ENCODE measurements at regions of chr2 and their contacts with region 1.

Region 1: GRCh38 chr2:98269274-98269673 is 77.0 kb upstream of the CNGA3 start:
- DNase-seq: peak; percentile 15
- H3K4me3 ChIP-seq: no peak overlapping the region
- H3K27ac ChIP-seq: no peak overlapping the region
- H3K27me3 ChIP-seq: peaks cover 3% of the 10 kb centered on the region
- CTCF ChIP-seq: peak; percentile 80

Region 2: DNA sequence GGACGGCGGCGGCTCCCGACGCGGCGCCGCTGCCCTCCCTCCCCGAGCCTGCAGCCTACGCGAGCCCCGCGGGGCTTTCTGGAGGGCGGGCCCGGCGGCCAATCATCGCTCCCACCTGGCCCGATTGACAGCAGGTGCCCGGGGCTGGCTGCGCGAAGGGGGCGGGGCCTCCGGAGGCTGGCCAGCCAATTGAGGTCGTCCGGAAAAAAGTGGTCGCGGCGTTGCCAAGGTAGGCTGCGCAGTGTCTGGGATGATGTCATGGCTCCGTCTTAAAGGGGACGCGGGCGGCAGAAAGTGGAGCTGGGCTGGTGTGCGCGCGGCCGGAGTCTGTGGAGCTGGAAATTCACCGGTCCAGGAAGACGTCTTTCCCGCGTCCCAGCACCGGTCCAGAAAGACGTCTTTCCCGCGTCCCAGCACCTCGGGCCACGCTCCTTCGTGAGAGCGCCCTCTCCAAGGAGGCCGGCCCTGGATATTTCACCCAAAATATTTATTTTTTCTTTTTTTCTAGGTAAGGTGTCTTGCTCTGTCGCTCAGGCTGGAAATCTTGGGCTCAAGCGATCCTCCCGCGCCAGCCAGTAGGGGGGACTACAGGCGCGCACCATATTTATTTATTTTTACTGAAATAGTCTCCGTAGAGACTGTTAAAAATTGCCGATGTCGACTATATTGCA is 605.2 kb before region 1 on chr2 and contains the start of gene ACTR1B:
- CTCF ChIA-PET with region 1: interaction called, 15 read pairs
- POLR2A ChIA-PET with region 1: no interaction called
- DNase-seq: peak; percentile 95
- H3K4me3 ChIP-seq: peak within 1 kb of the TSS; percentile 79
- H3K27ac ChIP-seq: peak within 1 kb of the TSS; percentile 94
- H3K27me3 ChIP-seq: no peaks in the 10 kb centered on the region
- CTCF ChIP-seq: peak; percentile 68
- polyA plus RNA-seq, gene ACTR1B: 26.4 and 37.6 TPM in 2 replicates

Region 3: GRCh38 chr2:97710596-97711386 is 558.5 kb before region 1 on chr2:
- CTCF ChIA-PET with region 1: interaction called, 16 read pairs
- POLR2A ChIA-PET with region 1: no interaction called
- DNase-seq: no peak
- H3K4me3 ChIP-seq: no peak overlapping the region
- H3K27ac ChIP-seq: no peak overlapping the region
- H3K27me3 ChIP-seq: peaks cover 14% of the 10 kb centered on the region
- CTCF ChIP-seq: no peak

Region 4: GRCh38 chr2:97740590-97741182 is 528.6 kb before region 1 on chr2:
- CTCF ChIA-PET with region 1: interaction called, 15 read pairs
- POLR2A ChIA-PET with region 1: no interaction called
- DNase-seq: no peak
- H3K4me3 ChIP-seq: no peak overlapping the region
- H3K27ac ChIP-seq: no peak overlapping the region
- H3K27me3 ChIP-seq: peaks cover 2% of the 10 kb centered on the region
- CTCF ChIP-seq: peak; percentile 80

Region 5: DNA sequence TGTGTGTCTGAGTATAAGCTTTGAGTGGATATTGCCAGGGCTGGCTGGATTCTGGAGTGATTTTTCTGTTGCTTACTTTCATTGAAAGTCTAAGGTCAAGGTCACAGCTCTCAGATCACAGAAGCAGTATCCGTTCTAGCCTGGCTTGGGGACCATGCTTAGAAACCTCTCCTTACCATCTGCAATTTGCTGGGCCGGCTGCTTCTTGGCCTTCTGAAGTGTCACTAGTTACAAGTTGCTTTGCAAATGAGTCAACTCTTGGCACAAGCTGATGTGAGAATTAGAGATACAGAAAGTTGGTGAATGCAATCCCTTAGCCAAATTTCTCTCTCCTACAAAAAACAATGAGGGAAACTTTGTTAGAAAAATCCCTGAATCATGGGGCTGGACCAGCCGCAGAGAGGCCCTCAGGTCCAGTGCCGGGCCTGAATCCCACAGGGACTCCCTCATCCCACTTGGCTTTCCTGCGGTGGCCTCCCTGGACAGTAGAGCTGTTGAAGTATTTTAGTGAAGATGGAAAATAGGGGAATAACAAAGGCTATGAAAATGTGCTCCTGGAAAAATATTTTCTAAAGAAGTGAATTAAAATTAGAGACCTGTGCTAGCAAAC is 15.7 kb before region 1 on chr2:
- CTCF ChIA-PET with region 1: interaction called, 13 read pairs
- POLR2A ChIA-PET with region 1: no interaction called
- DNase-seq: no peak
- H3K4me3 ChIP-seq: no peak overlapping the region
- H3K27ac ChIP-seq: no peak overlapping the region
- H3K27me3 ChIP-seq: no peaks in the 10 kb centered on the region
- CTCF ChIP-seq: no peak

Region 6: DNA sequence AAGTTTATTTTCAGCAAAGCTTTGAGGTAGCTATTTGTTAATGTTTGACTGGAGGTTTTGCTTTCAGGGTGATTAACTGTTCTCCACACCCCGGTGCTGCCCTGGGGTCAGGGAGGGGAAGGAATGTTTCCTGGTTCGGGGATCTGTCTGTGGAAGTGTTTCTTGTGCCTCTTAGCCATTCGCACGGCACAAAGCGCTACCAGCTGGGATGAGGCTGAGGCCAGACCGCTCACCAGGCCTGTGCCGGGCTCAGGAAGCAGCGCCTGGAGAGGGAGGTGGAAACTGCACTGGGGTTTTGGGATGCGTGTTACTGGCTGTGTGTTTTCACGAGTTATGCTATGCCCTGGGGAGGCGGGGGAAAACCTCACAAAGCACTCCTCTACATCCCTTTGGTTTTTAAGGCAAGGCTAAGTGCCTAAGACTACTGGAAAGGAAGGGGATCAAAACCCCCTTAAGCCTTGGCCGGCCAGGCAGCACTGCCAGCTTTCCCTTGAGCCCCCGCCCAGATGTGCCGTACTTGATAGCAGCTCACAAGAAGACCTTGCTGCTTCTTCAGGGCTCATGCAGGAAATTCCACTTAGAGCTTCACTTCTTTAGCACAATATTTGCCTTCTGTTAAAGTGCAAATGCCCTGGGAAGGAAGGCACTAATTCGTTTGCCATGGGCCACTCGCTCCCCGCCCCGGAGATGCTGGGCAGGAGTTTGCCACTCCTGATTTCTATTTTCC is 11.3 kb after region 1 on chr2:
- CTCF ChIA-PET with region 1: interaction called, 12 read pairs
- POLR2A ChIA-PET with region 1: no interaction called
- DNase-seq: no peak
- H3K4me3 ChIP-seq: no peak overlapping the region
- H3K27ac ChIP-seq: no peak overlapping the region
- H3K27me3 ChIP-seq: peaks cover 21% of the 10 kb centered on the region
- CTCF ChIP-seq: no peak

Measured in AG04450 (cell line).